Activated T-helper 2 cell treated with anti-CD3 and anti-CD28 coated beads, Interferon-gamma antibody, Interleukin-2, Interleukin-4, amounts not matched to agents 10 μg/mL and 5 μg/mL and 100 μg/mL, durations not matched to agents 14 hours and 24 hours and 36 hours (primary cell): ENCODE measurements at regions of chr1 and their contacts with region 1.

Region 1: DNA sequence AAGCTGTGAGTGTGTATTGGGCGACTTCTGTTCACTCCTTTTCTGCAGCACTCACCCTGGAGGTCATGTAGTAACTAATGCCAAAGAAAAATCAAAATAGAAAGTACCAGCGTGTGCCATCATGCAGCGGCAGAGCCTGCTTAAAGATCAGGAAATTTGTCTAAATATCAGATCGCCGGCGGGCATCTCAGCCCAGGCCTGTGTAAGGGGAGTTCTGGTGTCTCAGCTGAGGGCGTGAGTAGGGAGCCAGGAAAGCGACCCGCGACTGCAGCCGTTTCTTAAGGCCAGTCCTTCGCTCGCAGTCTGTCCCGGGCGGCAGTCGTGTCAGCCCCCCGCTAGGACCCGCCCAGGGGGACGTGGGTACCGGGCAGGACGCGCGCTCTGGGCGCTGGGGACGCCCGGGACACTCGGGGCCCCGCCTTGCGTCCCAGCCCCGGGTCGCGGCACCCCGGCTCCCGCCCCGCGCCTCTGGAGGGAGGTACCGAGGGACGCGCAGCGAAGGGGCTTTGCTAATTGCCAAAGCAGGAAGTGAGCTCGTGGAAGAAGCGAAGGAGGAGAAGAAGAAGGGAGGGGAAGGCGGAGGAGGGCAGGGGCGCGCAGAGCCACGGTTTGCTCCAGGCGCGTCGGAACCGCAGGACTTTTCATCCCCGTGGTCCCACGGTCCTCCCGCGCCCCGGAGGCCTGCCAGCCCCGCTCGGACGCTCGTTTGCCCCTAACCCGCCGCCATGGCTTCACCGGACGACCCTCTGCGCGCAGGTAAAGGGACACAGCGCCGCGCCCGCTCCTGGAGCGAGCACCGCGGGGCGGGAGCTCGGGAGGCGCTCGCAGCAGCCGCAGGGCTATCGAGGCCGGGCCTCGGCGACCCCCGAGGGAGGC is 1.1 kb downstream of the EDARADD start:
- DNase-seq: peak; percentile 64
- H3K4me3 Mint-ChIP-seq: peak overlapping the region; percentile 84
- H3K27ac Mint-ChIP-seq: peak overlapping the region; percentile 79
- H3K4me1 Mint-ChIP-seq: peaks cover 57% of the 10 kb centered on the region
- H3K27me3 Mint-ChIP-seq: peaks cover 11% of the 10 kb centered on the region

Region 2: GRCh38 chr1:235866913-235867845 is 528.0 kb before region 1 on chr1:
- intact Hi-C with region 1: loop called (anchors 5 kb)
- DNase-seq: peak; percentile 97
- H3K4me3 Mint-ChIP-seq: peak overlapping the region; percentile 98
- H3K27ac Mint-ChIP-seq: peak overlapping the region; percentile 99
- H3K4me1 Mint-ChIP-seq: peaks cover 52% of the 10 kb centered on the region
- H3K27me3 Mint-ChIP-seq: no peaks in the 10 kb centered on the region

Region 3: GRCh38 chr1:236142253-236143103 is 252.7 kb before region 1 on chr1 and contains the start of gene GPR137B:
- intact Hi-C with region 1: loop called (anchors 1 kb)
- DNase-seq: peak; percentile 51
- H3K4me3 Mint-ChIP-seq: peak within 1 kb of the TSS; percentile 99
- H3K27ac Mint-ChIP-seq: peak within 1 kb of the TSS; percentile 81
- H3K4me1 Mint-ChIP-seq: peaks cover 16% of the 10 kb centered on the region
- H3K27me3 Mint-ChIP-seq: peaks cover 42% of the 10 kb centered on the region
- total RNA-seq, gene GPR137B: 6.8 and 7.8 TPM in 2 replicates

Region 4: GRCh38 chr1:236320671-236321070 is 74.5 kb before region 1 on chr1:
- intact Hi-C with region 1: no loop called
- DNase-seq: no peak
- H3K4me3 Mint-ChIP-seq: no peak overlapping the region
- H3K27ac Mint-ChIP-seq: no peak overlapping the region
- H3K4me1 Mint-ChIP-seq: no peaks in the 10 kb centered on the region
- H3K27me3 Mint-ChIP-seq: peaks cover 4% of the 10 kb centered on the region

Region 5: DNA sequence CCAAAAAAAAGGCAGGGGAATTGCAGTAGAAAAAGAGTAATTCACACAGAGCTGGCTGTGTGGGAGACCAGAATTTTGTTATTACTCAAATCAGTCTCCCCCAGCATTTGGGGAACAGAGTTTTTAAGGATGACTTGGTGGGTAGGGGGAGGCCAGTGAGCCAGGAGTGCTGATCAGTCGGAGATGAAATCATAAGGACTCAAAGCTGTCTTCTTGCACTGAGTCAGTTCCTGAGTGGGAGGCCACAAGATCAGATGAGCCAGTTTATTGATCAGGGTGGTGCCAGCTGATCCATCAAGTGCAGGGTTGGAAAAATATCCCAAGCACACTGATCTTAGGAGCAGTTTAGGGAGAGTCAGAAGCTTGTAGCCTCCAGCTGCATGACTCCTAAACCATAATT is 24.7 kb before region 1 on chr1:
- intact Hi-C with region 1: loop called (anchors 1 kb)
- DNase-seq: no peak
- H3K4me3 Mint-ChIP-seq: no peak overlapping the region
- H3K27ac Mint-ChIP-seq: peak overlapping the region; percentile 67
- H3K4me1 Mint-ChIP-seq: peaks cover 13% of the 10 kb centered on the region
- H3K27me3 Mint-ChIP-seq: peaks cover 10% of the 10 kb centered on the region

Region 6: DNA sequence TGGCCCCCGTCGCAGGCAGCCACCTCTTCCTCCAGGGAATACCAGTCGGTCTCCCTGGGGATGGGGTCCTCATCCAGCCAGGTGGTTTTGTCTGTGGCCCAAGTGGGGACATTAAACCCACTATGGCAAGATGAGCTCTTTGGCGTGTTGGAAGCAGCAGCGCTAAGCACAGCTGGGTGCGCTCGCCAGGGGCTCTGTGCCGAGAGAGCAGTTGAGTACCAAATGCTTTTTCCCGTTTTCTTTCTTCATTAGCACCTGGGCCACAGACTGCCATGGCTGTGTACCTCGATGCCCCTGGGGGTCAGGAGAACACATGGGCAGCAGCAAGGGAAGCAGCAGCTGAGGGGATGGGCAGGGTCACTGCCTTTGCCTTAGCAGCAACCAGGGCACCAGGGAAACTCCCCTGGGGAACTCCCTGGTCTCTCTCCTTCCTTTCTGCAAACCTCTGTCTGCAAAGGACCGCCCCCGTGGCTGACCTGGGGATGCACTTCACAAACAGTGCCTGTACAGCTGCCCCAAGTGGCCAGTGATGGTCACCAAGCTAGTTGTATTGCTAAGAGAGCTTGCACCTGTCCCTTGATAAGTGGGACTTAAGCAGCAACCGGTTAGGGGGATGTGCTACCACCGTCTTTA is 30.0 kb after region 1 on chr1:
- intact Hi-C with region 1: no loop called
- DNase-seq: no peak
- H3K4me3 Mint-ChIP-seq: no peak overlapping the region
- H3K27ac Mint-ChIP-seq: peak overlapping the region; percentile 52
- H3K4me1 Mint-ChIP-seq: peaks cover 19% of the 10 kb centered on the region
- H3K27me3 Mint-ChIP-seq: no peaks in the 10 kb centered on the region

Region 7: DNA sequence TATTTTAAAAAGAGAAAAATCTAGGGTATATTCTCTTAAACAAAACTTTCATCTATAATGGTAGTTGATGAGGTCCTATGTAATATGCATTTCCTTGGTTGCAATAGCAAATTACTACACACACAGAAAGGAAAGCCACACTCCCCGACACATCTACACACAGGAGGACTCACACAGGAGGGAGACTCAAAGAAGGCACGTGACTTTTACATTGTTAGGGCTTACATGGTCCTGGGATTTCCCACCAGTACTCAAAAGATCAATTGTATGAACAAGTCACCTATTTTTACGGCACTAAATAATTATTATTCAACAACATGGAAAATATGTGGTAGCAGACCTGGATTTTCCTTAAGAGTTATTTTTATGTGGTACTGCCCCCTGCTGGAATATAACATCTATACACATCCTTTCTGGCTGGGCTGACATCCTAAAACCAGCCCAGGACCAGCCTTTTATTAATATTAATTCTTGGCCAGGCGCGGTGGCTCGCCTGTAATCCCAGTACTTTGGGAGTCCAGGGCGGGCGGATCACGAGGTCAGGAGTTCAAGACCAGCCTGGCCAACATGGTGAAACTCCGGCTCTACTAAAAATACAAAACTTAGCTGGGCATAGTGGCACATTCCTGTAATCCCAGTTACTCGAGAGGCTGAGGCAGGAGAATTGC is 94.7 kb after region 1 on chr1:
- intact Hi-C with region 1: loop called (anchors 5 kb)
- DNase-seq: no peak
- H3K4me3 Mint-ChIP-seq: no peak overlapping the region
- H3K27ac Mint-ChIP-seq: no peak overlapping the region
- H3K4me1 Mint-ChIP-seq: peaks cover 18% of the 10 kb centered on the region
- H3K27me3 Mint-ChIP-seq: peaks cover 20% of the 10 kb centered on the region